ENCODE measurements at regions of chr18 and their contacts with region 1.

Region 1: DNA sequence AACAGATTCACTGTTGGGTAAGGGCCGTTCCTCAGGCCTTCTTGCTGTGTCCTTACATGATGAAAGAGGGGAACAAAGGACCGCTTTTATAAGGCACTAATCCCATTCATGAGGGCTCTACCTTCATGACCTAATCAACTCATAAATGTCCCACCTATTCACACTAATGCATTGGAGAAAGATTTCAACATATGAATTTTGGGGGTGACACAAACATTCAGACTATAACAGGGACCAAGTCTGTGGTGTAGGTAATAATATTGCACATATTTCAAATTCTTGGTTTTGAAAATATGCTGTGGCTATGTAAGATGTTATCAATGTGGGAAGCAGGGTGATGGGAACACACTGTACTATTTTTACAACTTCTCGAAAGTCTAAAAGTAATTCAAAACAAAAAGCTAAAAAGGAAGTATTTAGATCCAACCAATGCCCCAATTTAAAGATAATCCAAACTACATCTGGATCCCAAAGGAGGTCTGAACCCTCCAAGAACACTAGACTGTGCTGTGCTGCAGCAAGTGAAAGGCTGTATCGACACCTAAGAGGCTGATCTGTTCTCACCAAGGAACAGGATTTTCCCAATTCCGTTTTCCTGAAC is 82.4 kb upstream of the TGIF1 start:
- DNase-seq: no peak
- H3K4me3 ChIP-seq: no peak overlapping the region
- H3K27ac ChIP-seq: no peak overlapping the region
- H3K4me1 ChIP-seq: no peaks in the 10 kb centered on the region
- CTCF ChIP-seq: no peak

Region 2: DNA sequence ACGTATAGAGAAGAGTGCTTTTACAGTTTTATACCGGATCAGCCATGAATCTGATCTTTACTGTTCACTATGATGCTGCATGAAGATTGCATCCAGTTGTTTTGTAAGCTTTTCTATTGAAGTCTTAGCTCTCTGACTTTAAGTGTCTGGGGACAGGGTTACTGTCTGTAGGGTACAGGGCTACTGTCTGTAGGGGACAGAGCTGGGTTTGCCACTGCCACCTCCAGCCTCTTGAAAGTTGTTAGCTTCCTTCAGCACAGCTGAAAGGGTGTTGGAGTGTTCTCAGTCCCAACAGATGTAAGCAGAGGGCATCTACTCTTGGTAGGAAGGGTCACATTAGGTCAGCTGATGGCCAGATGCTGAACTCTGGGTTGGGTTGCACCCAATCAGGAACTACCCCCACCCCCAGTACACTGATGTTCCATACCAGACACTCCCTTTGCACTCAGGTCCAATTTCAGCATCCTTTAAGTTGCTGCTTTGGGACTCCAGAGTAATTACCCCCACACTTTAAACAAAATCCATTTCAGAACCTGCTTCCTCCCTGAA is 47.6 kb before region 1 on chr18:
- CTCF ChIA-PET with region 1: no interaction called
- POLR2A ChIA-PET with region 1: no interaction called
- intact Hi-C with region 1: loop called (anchors 1 kb)
- DNase-seq: peak; percentile 33
- H3K4me3 ChIP-seq: peak overlapping the region; percentile 16
- H3K27ac ChIP-seq: peak overlapping the region; percentile 44
- H3K4me1 ChIP-seq: peaks cover 42% of the 10 kb centered on the region
- CTCF ChIP-seq: no peak

Region 3: DNA sequence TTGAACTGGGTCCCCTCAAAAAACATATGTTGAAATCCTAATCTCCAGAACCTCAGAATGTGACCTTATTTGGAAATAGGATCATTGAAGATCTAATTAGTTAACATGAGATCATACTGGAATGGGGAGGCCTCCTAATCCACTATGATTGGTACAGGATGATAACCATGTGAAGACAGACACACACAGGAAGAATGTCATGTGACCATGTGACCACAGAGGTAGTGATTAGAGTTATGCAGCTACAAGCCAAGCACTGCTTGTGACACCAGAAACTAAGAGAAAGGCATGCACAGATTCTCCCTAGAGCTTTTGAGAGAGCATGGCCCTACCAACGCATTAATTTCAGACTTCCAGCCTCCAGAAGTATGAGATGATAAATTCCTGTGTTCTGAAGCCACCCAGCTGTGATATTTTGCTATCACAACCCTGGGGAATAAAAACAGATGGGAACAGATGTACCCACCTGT is 35.4 kb after region 1 on chr18:
- CTCF ChIA-PET with region 1: no interaction called
- POLR2A ChIA-PET with region 1: no interaction called
- intact Hi-C with region 1: no loop called
- DNase-seq: peak; percentile 68
- H3K4me3 ChIP-seq: peak overlapping the region; percentile 19
- H3K27ac ChIP-seq: peak overlapping the region; percentile 84
- H3K4me1 ChIP-seq: peaks cover 44% of the 10 kb centered on the region
- CTCF ChIP-seq: no peak